ENCODE measurements at regions of chr3 and their contacts with region 1.

Region 1: GRCh38 chr3:169966428-169966950 is at the start of gene SEC62:
- DNase-seq: peak; percentile 94
- H3K4me3 ChIP-seq: peak within 1 kb of the TSS; percentile 25 to 87 (median 83)
- H3K27ac ChIP-seq: peak within 1 kb of the TSS; percentile 56
- H3K4me1 ChIP-seq: peaks cover 18% of the 10 kb centered on the region
- H3K27me3 ChIP-seq: peaks cover 0 to 8% of the 10 kb centered on the region in 2 experiments
- CTCF ChIP-seq: peak; percentile 20 to 49
- POLR2A ChIP-seq: peak; percentile 72
- total RNA-seq, gene SEC62: 77.8 and 90.8 TPM in 2 replicates

Region 2: GRCh38 chr3:169641167-169641566 is 325.3 kb before region 1 on chr3:
- CTCF ChIA-PET with region 1: no interaction called
- POLR2A ChIA-PET with region 1: no interaction called
- dilution Hi-C with region 1: no loop called
- intact Hi-C with region 1: no loop called
- DNase-seq: no peak
- H3K4me3 ChIP-seq: no peak overlapping the region
- H3K27ac ChIP-seq: no peak overlapping the region
- H3K4me1 ChIP-seq: no peaks in the 10 kb centered on the region
- H3K27me3 ChIP-seq: no peaks in the 10 kb centered on the region
- CTCF ChIP-seq: no peak
- POLR2A ChIP-seq: no peak

Region 3: DNA sequence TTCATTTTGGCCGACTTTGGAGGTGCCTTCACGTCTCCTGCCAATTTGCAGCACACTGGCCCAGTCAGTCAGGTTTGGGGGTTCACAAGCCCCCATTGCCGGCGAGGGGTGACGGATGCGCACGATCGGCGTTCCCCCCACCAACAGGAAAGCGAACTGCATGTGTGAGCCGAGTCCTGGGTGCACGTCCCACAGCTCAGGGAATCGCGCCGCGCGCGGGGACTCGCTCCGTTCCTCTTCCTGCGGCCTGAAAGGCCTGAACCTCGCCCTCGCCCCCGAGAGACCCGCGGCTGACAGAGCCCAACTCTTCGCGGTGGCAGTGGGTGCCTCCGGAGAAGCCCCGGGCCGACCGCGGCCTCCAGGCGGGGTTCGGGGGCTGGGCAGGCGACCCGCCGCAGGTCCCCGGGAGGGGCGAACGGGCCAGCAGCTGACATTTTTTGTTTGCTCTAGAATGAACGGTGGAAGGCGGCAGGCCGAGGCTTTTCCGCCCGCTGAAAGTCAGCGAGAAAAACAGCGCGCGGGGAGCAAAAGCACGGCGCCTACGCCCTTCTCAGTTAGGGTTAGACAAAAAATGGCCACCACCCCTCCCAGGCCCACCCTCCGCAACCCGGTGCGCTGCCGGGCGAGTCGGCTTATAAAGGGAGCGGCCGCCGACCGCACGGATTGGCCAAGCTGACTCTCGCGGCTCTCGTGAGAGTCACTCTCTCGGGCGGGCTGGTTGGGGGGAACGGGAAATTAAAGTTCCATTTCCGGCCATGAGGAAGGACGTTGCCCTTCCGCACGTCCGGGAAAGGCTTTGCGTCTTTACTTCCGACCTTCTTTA is 201.8 kb before region 1 on chr3 and contains the start of gene TERC:
- CTCF ChIA-PET with region 1: no interaction called
- POLR2A ChIA-PET with region 1: no interaction called
- dilution Hi-C with region 1: no loop called
- intact Hi-C with region 1: loop called (anchors 2 kb)
- DNase-seq: peak; percentile 77
- H3K4me3 ChIP-seq: peak within 1 kb of the TSS; percentile 36 to 53 (median 41)
- H3K27ac ChIP-seq: peak within 1 kb of the TSS; percentile 31
- H3K4me1 ChIP-seq: peaks cover 8% of the 10 kb centered on the region
- H3K27me3 ChIP-seq: no peaks in the 10 kb centered on the region
- CTCF ChIP-seq: no peak
- POLR2A ChIP-seq: peak; percentile 77
- total RNA-seq, gene TERC: 6.1 and 10.0 TPM in 2 replicates

Region 4: DNA sequence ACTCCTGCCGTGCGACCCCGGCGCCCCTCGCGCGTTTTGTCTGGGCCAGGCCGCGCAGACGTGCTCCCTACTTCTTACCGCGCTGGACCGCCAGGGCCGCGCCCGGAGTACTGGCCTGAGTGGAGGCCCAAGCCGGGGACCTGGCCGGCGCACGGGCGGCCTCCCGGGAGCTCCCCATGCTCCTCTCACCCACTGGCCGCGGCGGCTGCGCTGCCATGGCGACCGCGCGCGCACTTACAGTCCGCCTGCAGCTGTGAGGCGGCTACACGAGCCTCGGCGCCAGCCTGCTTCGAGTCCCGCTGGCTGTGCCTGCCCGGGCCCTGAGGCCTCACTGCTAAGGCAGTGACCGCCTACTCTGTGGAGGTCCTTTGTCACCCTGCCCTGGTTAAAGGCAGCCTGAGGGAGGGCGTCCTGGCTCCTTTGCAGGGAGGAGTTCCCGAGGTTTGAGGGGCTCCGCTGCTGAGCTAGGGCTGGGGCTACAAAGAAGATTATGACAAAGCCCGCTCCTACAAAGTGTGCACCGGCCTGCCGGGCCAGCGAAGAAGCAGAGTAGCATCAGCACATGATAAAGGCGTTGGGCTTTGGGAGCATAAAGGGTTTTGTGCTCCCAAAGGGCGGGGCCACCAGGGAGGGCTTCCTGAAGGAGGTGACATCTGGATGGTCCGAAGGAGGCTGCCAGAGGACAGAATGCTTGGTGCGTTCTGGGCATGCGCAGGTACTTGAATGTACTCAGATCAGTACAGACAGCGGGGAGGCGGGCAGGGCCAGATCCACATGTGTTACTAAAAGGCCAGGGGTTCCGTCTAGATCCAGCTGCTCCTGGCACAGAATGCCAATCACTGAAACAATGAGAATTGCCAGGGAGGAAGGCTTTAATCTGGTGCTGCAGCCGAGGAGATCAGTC is 153.9 kb before region 1 on chr3 and contains the starts of genes LRRC34 and LRRIQ4:
- CTCF ChIA-PET with region 1: no interaction called
- POLR2A ChIA-PET with region 1: no interaction called
- dilution Hi-C with region 1: no loop called
- intact Hi-C with region 1: loop called (anchors 1 kb)
- DNase-seq: peak; percentile 77
- H3K4me3 ChIP-seq: peak within 1 kb of the TSS; percentile 11 to 48 (median 44)
- H3K27ac ChIP-seq: no peak within 1 kb of the TSS
- H3K4me1 ChIP-seq: peaks cover 15% of the 10 kb centered on the region
- H3K27me3 ChIP-seq: no peaks in the 10 kb centered on the region
- CTCF ChIP-seq: no peak
- POLR2A ChIP-seq: no peak
- total RNA-seq, gene LRRC34: 2.4 and 2.5 TPM in 2 replicates
- total RNA-seq, gene LRRIQ4: not detected in 2 replicates

Region 5: GRCh38 chr3:169846458-169847193 is 119.9 kb before region 1 on chr3:
- CTCF ChIA-PET with region 1: no interaction called
- POLR2A ChIA-PET with region 1: no interaction called
- dilution Hi-C with region 1: no loop called
- intact Hi-C with region 1: no loop called
- DNase-seq: no peak
- H3K4me3 ChIP-seq: no peak overlapping the region
- H3K27ac ChIP-seq: no peak overlapping the region
- H3K4me1 ChIP-seq: no peaks in the 10 kb centered on the region
- H3K27me3 ChIP-seq: peaks cover 3 to 10% of the 10 kb centered on the region in 2 experiments
- CTCF ChIP-seq: no peak
- POLR2A ChIP-seq: no peak

Measured in endothelial cell of umbilical vein (primary cell).